ENCODE measurements at regions of chr9 and their contacts with region 1.

Region 1: DNA sequence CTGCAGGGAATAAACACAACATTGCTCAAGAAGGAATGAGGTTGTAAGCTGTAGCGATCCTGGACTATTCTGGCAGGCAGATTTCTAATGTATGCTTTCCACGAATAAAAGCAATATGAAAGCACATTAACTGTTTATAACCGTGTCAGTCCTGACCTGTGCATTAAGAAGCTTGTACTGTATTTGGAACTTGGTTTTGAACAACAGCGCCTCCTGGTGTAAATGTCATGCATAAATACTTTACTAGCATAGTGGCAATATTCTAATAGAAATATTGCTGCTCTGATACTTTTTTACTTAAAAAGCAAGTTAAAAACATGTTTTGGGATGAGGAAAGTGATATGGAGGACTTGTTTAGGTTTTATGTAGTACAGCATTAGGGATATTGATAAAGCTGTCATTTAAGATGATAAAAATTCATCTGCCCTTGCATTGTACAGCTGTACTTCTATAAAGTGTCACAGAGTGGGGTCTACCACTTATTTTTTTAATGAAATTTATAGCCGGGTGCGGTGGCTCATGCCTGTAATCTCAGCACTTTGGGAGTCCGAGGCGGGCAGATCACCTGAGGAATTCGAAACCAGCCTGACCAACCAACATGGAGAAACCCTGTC is 70.7 kb upstream of the GNE start:
- DNase-seq: no peak
- ATAC-seq: peak; percentile 57 to 81 (median 66)
- H3K4me3 ChIP-seq: no peak overlapping the region
- H3K27ac ChIP-seq: no peak overlapping the region
- H3K4me1 ChIP-seq: no peaks in the 10 kb centered on the region
- H3K27me3 ChIP-seq: no peaks in the 10 kb centered on the region
- CTCF ChIP-seq: peak; percentile 76

Region 2: DNA sequence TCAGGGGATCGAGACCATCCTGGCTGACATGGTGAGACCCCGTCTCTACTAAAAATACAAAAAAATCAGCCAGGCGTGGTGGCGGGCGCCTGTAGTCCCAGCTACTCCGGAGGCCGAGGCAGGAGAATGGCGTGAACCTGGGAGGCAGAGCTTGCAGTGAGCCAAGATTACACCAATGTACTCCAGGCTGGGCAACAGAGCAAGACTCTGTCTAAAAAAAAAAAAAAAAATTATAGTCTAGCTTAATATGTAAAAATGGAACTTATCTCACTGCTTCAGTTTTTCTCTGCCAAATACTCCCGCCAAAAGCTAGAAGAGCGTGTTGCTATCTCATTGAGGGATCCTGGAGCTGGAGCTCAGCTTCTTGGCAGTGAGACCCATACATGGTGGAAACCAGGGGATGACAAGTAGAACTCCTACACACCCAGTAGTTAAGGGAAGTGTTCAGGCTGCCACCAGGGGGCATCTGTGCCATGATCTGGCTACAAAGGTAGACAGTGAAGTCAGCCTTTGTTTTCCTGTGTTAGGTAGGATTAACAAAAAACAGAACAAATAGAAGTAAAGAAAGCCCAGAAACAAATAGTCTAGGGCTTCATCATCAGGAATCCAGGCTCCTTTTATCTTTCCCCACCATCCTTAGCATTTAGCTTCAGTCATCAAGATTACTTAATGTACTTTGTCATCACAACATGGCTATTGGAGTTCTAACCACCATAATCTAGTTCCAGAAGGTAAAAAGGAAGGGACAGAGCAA is 226.0 kb before region 1 on chr9:
- intact Hi-C with region 1: loop called in 1 of 2 experiments (anchors 5 kb)
- DNase-seq: peak; percentile 76 to 87
- ATAC-seq: peak; percentile 75 to 86 (median 82)
- H3K4me3 ChIP-seq: no peak overlapping the region
- H3K27ac ChIP-seq: no peak overlapping the region
- H3K4me1 ChIP-seq: no peaks in the 10 kb centered on the region
- H3K27me3 ChIP-seq: no peaks in the 10 kb centered on the region
- CTCF ChIP-seq: peak; percentile 79

Region 3: DNA sequence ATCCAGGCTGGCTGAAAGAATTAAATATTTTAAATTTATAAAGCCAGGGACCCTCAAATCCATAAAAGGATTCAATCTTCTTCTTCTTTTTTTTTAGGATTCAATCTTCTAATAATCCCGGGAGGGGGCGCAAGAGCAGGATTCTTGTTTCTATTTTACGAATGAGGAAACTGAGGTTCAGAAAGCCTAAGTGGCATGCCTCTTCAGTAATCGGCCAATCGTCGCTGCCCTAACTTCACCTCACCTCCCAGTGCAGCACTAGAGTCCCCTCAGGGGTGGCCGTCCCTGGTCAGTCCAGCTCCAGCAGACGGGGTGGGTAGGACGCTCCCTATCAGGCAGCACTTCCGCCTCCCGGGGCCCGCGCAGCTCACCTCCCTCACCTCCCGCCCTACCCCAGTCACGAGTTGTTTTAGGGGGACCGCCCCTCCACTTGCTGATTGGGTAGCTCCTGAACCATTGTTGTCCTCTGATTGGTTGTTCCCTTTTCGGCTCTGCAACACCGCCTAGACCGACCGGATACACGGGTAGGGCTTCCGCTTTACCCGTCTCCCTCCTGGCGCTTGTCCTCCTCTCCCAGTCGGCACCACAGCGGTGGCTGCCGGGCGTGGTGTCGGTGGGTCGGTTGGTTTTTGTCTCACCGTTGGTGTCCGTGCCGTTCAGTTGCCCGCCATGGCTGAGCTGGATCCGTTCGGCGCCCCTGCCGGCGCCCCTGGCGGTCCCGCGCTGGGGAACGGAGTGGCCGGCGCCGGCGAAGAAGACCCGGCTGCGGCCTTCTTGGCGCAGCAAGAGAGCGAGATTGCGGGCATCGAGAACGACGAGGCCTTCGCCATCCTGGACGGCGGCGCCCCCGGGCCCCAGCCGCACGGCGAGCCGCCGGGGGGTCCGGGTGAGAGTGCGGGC is 138.3 kb before region 1 on chr9 and contains the start of gene CLTA:
- intact Hi-C with region 1: loop called (anchors 5 kb)
- DNase-seq: peak; percentile 96 to 97
- ATAC-seq: peak; percentile 97 to 99 (median 99)
- H3K4me3 ChIP-seq: peak within 1 kb of the TSS; percentile 95
- H3K27ac ChIP-seq: peak within 1 kb of the TSS; percentile 97
- H3K4me1 ChIP-seq: peaks cover 41% of the 10 kb centered on the region
- H3K27me3 ChIP-seq: no peaks in the 10 kb centered on the region
- CTCF ChIP-seq: peak; percentile 47
- total RNA-seq, gene CLTA: 52.1 to 58.3 (median 54.6) TPM

Region 4: GRCh38 chr9:36245906-36246305 is 83.0 kb before region 1 on chr9:
- intact Hi-C with region 1: loop called (anchors 2 to 5 kb)
- DNase-seq: no peak
- ATAC-seq: no peak
- H3K4me3 ChIP-seq: no peak overlapping the region
- H3K27ac ChIP-seq: no peak overlapping the region
- H3K4me1 ChIP-seq: peaks cover 3% of the 10 kb centered on the region
- H3K27me3 ChIP-seq: no peaks in the 10 kb centered on the region
- CTCF ChIP-seq: no peak

Region 5: DNA sequence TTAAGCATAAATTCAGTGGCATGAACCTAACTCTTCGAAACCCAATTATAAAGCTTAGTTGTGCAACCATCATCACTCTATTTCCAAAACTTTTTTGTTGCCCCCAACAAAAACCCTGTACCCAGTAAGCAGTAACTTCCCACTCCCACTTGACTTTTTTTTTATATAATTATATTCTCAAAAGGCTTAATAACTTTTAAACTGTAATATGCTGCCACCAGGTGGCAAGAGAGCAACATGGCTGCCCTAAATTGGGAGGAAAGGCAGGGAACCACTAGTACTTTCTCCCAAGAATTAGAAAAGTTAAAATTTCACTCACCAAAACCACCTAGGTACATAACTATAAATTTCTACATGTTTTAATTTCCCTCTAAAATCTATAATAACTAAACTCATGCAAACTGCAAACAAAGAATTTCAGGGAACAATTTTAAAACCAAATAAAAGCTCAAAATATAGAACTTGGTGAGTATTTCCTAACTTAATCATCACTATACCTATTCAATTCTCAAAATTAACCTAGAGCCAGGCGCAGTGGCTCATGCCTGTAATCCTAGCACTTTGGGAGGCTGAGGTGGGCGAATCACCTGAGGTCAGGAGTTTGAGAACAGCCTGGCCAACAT is 121.3 kb after region 1 on chr9:
- intact Hi-C with region 1: no loop called
- DNase-seq: no peak
- ATAC-seq: peak in 1 of 4 donors; percentile 52
- H3K4me3 ChIP-seq: no peak overlapping the region
- H3K27ac ChIP-seq: no peak overlapping the region
- H3K4me1 ChIP-seq: peaks cover 8% of the 10 kb centered on the region
- H3K27me3 ChIP-seq: no peaks in the 10 kb centered on the region
- CTCF ChIP-seq: peak; percentile 60

Region 6: GRCh38 chr9:36762958-36763357 is 434.1 kb after region 1 on chr9:
- intact Hi-C with region 1: no loop called
- DNase-seq: no peak
- ATAC-seq: no peak
- H3K4me3 ChIP-seq: no peak overlapping the region
- H3K27ac ChIP-seq: no peak overlapping the region
- H3K4me1 ChIP-seq: no peaks in the 10 kb centered on the region
- H3K27me3 ChIP-seq: peaks cover 0 to 13% (median 12%) of the 10 kb centered on the region in 3 donors
- CTCF ChIP-seq: no peak